ENCODE measurements at regions of chr19 and their contacts with region 1.

Region 1: DNA sequence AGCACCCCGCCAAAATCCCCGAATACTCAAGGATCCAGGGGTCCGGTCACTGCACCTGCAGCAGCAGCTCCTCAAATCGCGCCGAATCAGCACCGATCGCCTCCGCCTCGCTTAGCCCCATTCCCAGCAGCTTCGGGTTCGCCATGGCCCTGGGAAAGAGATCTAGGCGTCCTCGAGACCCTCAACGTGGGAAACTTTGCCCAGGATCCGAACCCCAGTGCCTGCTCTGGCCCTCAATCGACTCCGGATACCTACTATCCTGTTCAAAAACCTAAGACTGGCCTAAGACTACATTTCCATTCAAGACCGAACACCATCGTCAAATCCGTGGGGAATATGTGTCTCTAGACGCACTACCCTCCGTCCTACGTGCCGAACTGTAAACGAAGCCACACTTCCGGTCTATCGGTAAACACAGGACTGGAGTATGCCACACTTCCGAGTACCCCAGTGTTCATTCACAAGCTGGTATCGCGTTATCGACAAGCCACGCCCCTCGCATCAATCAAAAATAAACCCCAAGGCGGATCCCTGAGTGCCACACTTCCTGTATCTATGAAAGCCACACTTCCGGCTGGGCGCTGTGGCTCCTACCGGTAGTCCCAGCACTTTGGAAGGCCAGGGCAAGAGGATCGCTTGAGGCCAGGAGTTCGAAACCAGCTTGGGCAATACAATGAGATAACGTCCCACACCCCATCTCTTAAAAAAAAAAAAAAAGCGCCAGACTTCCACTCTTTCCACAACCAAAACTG is at the start of gene PIH1D1:
- DNase-seq: peak; percentile 100
- H3K4me3 ChIP-seq: peak within 1 kb of the TSS; percentile 93
- H3K27ac ChIP-seq: peak within 1 kb of the TSS; percentile 92
- H3K4me1 ChIP-seq: peaks cover 31% of the 10 kb centered on the region
- CTCF ChIP-seq: no peak
- total RNA-seq, gene PIH1D1: 114 and 117 TPM in 2 replicates

Region 2: GRCh38 chr19:49391581-49392399 is 59.8 kb before region 1 on chr19:
- CTCF ChIA-PET with region 1: no interaction called
- POLR2A ChIA-PET with region 1: no interaction called
- intact Hi-C with region 1: no loop called
- DNase-seq: peak; percentile 90
- H3K4me3 ChIP-seq: peak overlapping the region; percentile 11
- H3K27ac ChIP-seq: peak overlapping the region; percentile 92
- H3K4me1 ChIP-seq: peaks cover 86% of the 10 kb centered on the region
- CTCF ChIP-seq: peak; percentile 99

Region 3: GRCh38 chr19:49487277-49488045 is 35.9 kb after region 1 on chr19 and contains the start of gene RPL13A:
- CTCF ChIA-PET with region 1: no interaction called
- POLR2A ChIA-PET with region 1: interaction called, 4 read pairs
- intact Hi-C with region 1: loop called (anchors 5 kb)
- DNase-seq: peak; percentile 100
- H3K4me3 ChIP-seq: peak within 1 kb of the TSS; percentile 95
- H3K27ac ChIP-seq: peak within 1 kb of the TSS; percentile 94
- H3K4me1 ChIP-seq: peaks cover 30% of the 10 kb centered on the region
- CTCF ChIP-seq: no peak
- total RNA-seq, gene RPL13A: 6,720 and 8,461 TPM in 2 replicates

Region 4: GRCh38 chr19:49567861-49568441 is 116.3 kb after region 1 on chr19:
- CTCF ChIA-PET with region 1: no interaction called
- POLR2A ChIA-PET with region 1: no interaction called
- intact Hi-C with region 1: no loop called
- DNase-seq: no peak
- H3K4me3 ChIP-seq: no peak overlapping the region
- H3K27ac ChIP-seq: no peak overlapping the region
- H3K4me1 ChIP-seq: peaks cover 24% of the 10 kb centered on the region
- CTCF ChIP-seq: no peak

Region 5: DNA sequence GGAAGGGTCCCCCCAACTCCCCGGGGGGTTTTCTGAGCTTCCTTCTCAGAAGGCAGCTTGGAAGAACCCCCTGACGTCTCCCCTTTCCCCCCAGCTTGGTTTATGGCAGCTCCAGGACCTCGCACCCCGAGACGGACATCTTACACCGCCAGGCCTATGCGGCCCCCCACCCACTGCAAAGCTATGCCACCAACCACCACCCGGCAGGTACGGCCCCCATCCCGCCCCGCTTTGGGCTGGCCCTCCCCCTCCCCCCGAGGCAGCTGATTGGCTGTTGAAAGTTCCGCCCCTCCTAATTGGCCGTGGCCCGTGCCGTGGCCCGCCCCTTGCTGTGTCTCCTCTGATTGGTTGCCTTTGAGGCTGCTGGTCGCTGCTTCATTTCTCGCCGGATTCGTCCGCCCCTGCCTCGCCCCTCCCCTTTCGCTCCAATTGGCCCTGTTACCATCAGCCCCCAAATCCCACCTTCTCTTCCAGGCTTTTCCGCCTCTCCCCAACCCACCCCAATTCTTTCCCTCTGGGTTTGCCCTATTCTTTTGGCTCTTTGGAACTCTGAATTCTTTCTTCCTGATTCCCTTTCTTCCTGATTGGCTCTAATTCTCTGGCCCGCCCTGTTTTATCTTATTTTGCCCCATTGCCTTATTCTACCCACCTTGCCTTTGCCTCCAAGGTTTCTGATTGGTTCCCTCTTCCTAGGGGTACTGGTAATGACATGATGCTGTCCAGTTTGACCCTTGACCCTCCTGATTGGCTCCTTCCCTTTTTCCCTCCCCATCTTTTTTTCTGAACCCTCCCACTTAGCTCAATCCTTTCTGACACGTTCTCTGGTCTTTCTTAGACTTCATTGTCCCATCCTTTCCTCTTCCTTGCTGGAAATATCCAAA is 141.9 kb after region 1 on chr19:
- CTCF ChIA-PET with region 1: no interaction called
- POLR2A ChIA-PET with region 1: no interaction called
- intact Hi-C with region 1: no loop called
- DNase-seq: peak; percentile 96
- H3K4me3 ChIP-seq: peak overlapping the region; percentile 94
- H3K27ac ChIP-seq: peak overlapping the region; percentile 96
- H3K4me1 ChIP-seq: peaks cover 13% of the 10 kb centered on the region
- CTCF ChIP-seq: no peak